Right lobe of liver (tissue), 6 donors: ENCODE measurements at regions of chr1 and their contacts with region 1.

Region 1: GRCh38 chr1:167442124-167442848 is 76.0 kb downstream of the CD247 start:
- DNase-seq: peak; percentile 87 to 90 (median 87)
- ATAC-seq: peak; percentile 94 to 98 (median 96)
- H3K4me3 ChIP-seq: no peak overlapping the region
- H3K27ac ChIP-seq: no peak overlapping the region
- H3K4me1 ChIP-seq: peaks cover 0 to 8% (median 0%) of the 10 kb centered on the region in 4 donors
- H3K27me3 ChIP-seq: no peaks in the 10 kb centered on the region
- CTCF ChIP-seq: peak; percentile 83 to 89 (median 86)
- POLR2A ChIP-seq: no peak

Region 2: GRCh38 chr1:167066333-167067122 is 375.8 kb before region 1 on chr1:
- intact Hi-C with region 1: loop called (anchors 5 to 10 kb)
- DNase-seq: peak; percentile 78 to 84 (median 80)
- ATAC-seq: peak; percentile 97 to 100 (median 100)
- H3K4me3 ChIP-seq: no peak overlapping the region
- H3K27ac ChIP-seq: no peak overlapping the region
- H3K4me1 ChIP-seq: no peaks in the 10 kb centered on the region
- H3K27me3 ChIP-seq: no peaks in the 10 kb centered on the region
- CTCF ChIP-seq: peak; percentile 94 to 100 (median 97)
- POLR2A ChIP-seq: no peak

Region 3: GRCh38 chr1:167136191-167136614 is 306.1 kb before region 1 on chr1:
- intact Hi-C with region 1: no loop called
- DNase-seq: no peak
- ATAC-seq: no peak
- H3K4me3 ChIP-seq: no peak overlapping the region
- H3K27ac ChIP-seq: no peak overlapping the region
- H3K4me1 ChIP-seq: no peaks in the 10 kb centered on the region
- H3K27me3 ChIP-seq: no peaks in the 10 kb centered on the region
- CTCF ChIP-seq: no peak
- POLR2A ChIP-seq: no peak